ENCODE measurements at regions of chr4 and their contacts with region 1.

Region 1: GRCh38 chr4:15001869-15002658 is at the start of gene CPEB2:
- DNase-seq: peak; percentile 84 to 97 (median 91)
- ATAC-seq: peak; percentile 70
- H3K4me3 ChIP-seq: peak within 1 kb of the TSS; percentile 77 to 97
- H3K4me3 Mint-ChIP-seq: peak within 1 kb of the TSS; percentile 93
- H3K27ac ChIP-seq: peak within 1 kb of the TSS; percentile 100
- H3K27ac Mint-ChIP-seq: peak within 1 kb of the TSS; percentile 98
- H3K4me1 ChIP-seq: peaks cover 11% of the 10 kb centered on the region
- H3K4me1 Mint-ChIP-seq: peaks cover 26% of the 10 kb centered on the region
- H3K27me3 ChIP-seq: no peaks in the 10 kb centered on the region
- H3K27me3 Mint-ChIP-seq: no peaks in the 10 kb centered on the region
- CTCF ChIP-seq: no peak
- total RNA-seq, gene CPEB2: 17.7 to 21.8 TPM

Region 2: DNA sequence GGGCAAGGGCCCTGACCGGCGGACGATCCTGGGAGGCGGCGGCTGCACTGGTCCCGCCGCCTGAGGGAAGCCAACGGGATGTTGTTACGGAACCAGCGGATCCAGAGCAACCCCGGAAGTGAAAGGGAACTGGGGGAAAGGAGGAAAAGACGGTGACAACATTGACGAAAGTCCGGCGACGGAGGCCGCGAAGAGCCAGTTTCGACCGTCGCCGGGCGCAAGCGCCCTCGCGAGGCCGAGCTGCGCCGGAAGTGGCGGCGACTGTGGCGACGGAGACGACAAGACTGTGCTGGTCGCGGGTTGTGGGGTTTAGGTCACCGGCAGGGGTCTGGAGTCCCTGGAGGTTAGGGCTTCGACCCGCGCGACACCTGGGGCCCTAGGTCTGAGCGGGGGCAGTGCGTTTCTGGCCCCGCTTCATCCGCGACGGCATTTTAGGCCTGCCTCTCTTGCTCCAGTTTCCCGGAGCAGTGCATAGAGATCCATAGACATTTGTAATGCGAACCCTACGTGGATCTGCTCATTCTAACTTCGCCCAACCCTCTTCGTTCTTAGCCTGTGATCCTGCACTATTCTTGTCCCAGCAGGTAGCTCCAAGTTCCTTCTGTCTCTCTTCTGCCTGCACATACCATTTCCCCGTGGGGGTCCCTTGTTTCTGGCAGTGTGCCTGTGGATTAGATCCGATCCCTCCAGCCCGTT is 1374.3 kb before region 1 on chr4 and contains the start of gene BOD1L1:
- CTCF ChIA-PET with region 1: no interaction called
- POLR2A ChIA-PET with region 1: interaction called, 3 read pairs
- intact Hi-C with region 1: loop called (anchors 1 to 5 kb)
- DNase-seq: peak; percentile 43 to 93 (median 79)
- ATAC-seq: peak; percentile 70
- H3K4me3 ChIP-seq: peak within 1 kb of the TSS; percentile 65 to 81
- H3K4me3 Mint-ChIP-seq: peak within 1 kb of the TSS; percentile 92
- H3K27ac ChIP-seq: peak within 1 kb of the TSS; percentile 80 to 88
- H3K27ac Mint-ChIP-seq: peak within 1 kb of the TSS; percentile 97
- H3K4me1 ChIP-seq: peaks cover 26% of the 10 kb centered on the region
- H3K4me1 Mint-ChIP-seq: peaks cover 50% of the 10 kb centered on the region
- H3K27me3 ChIP-seq: no peaks in the 10 kb centered on the region
- H3K27me3 Mint-ChIP-seq: no peaks in the 10 kb centered on the region
- CTCF ChIP-seq: no peak
- total RNA-seq, gene BOD1L1: 44.0 to 48.3 TPM

Region 3: DNA sequence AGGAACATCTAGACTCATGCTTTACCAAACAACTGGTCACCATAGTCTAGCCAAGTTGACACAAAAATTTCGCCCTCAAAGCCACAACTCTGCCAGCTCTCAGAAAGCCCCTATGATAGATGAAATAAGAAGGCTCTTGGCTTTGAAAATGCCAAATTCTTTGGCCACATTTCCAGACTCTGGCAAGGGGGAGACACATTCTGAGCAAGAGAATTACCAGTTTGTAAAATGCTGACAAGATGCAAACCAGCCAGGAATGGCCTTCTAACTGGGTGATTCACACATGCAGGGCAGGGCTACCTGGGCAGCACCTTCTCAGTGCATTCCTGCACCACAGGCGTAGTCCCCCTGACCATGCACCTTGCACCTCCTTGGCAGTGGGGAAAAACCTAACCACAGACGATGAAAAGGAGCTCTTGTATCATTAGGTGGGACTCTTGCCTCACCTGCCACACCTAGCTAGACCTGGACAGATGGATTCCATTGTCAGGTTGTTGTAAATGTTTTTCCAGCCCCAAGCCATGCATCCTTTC is 77.2 kb before region 1 on chr4:
- CTCF ChIA-PET with region 1: no interaction called
- POLR2A ChIA-PET with region 1: no interaction called
- intact Hi-C with region 1: loop called (anchors 5 kb)
- DNase-seq: peak in 2 of 9 experiments; percentile 28 to 33
- ATAC-seq: peak; percentile 28
- H3K4me3 ChIP-seq: no peak overlapping the region
- H3K4me3 Mint-ChIP-seq: no peak overlapping the region
- H3K27ac ChIP-seq: no peak overlapping the region
- H3K27ac Mint-ChIP-seq: no peak overlapping the region
- H3K4me1 ChIP-seq: no peaks in the 10 kb centered on the region
- H3K4me1 Mint-ChIP-seq: no peaks in the 10 kb centered on the region
- H3K27me3 ChIP-seq: no peaks in the 10 kb centered on the region
- H3K27me3 Mint-ChIP-seq: no peaks in the 10 kb centered on the region
- CTCF ChIP-seq: no peak

Region 4: GRCh38 chr4:15231265-15232091 is 229.4 kb after region 1 on chr4:
- CTCF ChIA-PET with region 1: no interaction called
- POLR2A ChIA-PET with region 1: no interaction called
- intact Hi-C with region 1: loop called in 1 of 2 experiments (anchors 5 kb)
- DNase-seq: peak; percentile 38 to 83 (median 71)
- ATAC-seq: peak; percentile 81
- H3K4me3 ChIP-seq: no peak overlapping the region
- H3K4me3 Mint-ChIP-seq: no peak overlapping the region
- H3K27ac ChIP-seq: no peak overlapping the region
- H3K27ac Mint-ChIP-seq: no peak overlapping the region
- H3K4me1 ChIP-seq: peaks cover 29% of the 10 kb centered on the region
- H3K4me1 Mint-ChIP-seq: peaks cover 31% of the 10 kb centered on the region
- H3K27me3 ChIP-seq: no peaks in the 10 kb centered on the region
- H3K27me3 Mint-ChIP-seq: no peaks in the 10 kb centered on the region
- CTCF ChIP-seq: peak; percentile 71

Region 5: DNA sequence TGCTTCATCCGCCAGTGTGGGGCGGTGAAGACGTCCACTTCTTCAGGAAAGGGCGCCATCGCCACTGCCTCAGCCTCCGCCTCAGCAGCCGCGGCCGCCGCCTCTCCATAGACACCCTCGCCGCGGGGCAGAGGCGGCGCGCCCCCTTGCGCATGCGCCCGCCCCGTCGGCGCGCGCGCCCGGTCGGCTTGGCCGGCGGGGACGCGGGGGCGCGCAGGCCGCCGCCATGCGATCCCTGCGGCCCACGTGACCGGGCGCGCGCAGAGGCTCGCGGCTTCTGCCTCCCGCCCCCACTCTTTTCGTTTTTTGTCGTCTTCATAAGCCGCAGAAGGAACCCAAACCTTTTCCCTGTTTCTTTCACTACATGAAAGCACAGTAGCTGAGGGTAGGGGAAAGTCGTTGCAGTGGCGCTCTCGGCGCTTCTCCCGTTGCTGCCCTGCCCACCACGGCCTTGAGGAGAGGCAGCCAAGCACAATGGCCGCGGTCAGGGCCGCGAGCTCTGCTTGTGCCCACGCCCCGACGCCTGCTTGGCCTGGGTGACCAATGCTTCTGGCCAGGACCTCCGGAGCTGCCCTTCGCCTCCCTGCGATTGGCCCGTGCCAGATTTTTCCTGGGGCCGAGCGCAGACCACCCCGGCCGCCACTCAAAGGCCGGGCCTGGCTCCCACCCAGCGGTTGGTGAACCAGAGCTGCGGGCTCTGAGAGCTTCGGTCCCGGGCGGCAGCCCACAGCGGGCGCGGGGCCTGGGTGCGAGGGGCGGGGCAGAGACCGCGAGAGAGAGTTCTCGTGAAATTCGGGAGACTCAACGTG is 653.4 kb after region 1 on chr4 and contains the start of gene FBXL5:
- CTCF ChIA-PET with region 1: no interaction called
- POLR2A ChIA-PET with region 1: interaction called, 10 read pairs
- intact Hi-C with region 1: loop called (anchors 1 kb)
- DNase-seq: peak; percentile 66 to 95 (median 80)
- ATAC-seq: peak; percentile 79
- H3K4me3 ChIP-seq: peak within 1 kb of the TSS; percentile 67 to 85
- H3K4me3 Mint-ChIP-seq: peak within 1 kb of the TSS; percentile 98
- H3K27ac ChIP-seq: peak within 1 kb of the TSS; percentile 88 to 92
- H3K27ac Mint-ChIP-seq: peak within 1 kb of the TSS; percentile 97
- H3K4me1 ChIP-seq: peaks cover 51% of the 10 kb centered on the region
- H3K4me1 Mint-ChIP-seq: peaks cover 46% of the 10 kb centered on the region
- H3K27me3 ChIP-seq: no peaks in the 10 kb centered on the region
- H3K27me3 Mint-ChIP-seq: no peaks in the 10 kb centered on the region
- CTCF ChIP-seq: no peak
- total RNA-seq, gene FBXL5: 60.4 to 61.7 TPM

Region 6: DNA sequence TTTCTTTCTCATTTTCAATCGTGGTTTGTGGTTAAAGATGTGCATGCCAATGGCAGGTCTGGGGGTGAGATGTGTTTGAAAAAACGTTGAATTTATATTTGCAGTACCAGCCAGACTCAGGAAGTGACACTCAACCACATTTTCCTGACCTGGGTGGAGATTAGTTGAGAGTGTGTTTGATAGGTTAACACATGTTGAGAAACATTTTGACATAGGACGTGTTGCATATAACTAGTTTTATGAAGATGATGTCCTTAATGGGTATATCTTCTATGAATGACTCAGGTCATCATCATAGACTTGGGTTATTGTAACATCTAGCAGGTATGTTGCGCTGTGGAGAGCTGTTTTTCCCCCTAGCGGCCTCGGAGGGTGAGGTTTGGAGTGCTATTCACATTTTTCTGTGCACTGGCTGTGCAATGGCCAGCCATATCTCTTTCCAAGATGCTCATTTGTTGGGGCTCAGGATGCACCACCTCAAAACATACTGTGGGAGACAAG is 754.3 kb after region 1 on chr4:
- CTCF ChIA-PET with region 1: no interaction called
- POLR2A ChIA-PET with region 1: interaction called, 3 read pairs
- intact Hi-C with region 1: loop called (anchors 1 to 5 kb)
- DNase-seq: peak; percentile 28 to 94 (median 71)
- ATAC-seq: peak; percentile 85
- H3K4me3 ChIP-seq: peak overlapping the region; percentile 14 to 23
- H3K4me3 Mint-ChIP-seq: peak overlapping the region; percentile 67
- H3K27ac ChIP-seq: peak overlapping the region; percentile 27 to 63
- H3K27ac Mint-ChIP-seq: peak overlapping the region; percentile 84
- H3K4me1 ChIP-seq: peaks cover 43% of the 10 kb centered on the region
- H3K4me1 Mint-ChIP-seq: peaks cover 50% of the 10 kb centered on the region
- H3K27me3 ChIP-seq: no peaks in the 10 kb centered on the region
- H3K27me3 Mint-ChIP-seq: no peaks in the 10 kb centered on the region
- CTCF ChIP-seq: peak; percentile 77